Breast epithelium (tissue), 4 donors: ENCODE measurements at regions of chr12 and their contacts with region 1.

Region 1: GRCh38 chr12:53543539-53543938 is 36.3 kb upstream of the NPFF start:
- DNase-seq: peak; percentile 56 to 63
- H3K4me3 ChIP-seq: no peak overlapping the region
- H3K27ac ChIP-seq: peak overlapping the region; percentile 78 to 86
- H3K4me1 ChIP-seq: peaks cover 0 to 10% of the 10 kb centered on the region in 2 donors
- H3K27me3 ChIP-seq: no peaks in the 10 kb centered on the region
- CTCF ChIP-seq: peak; percentile 74 to 98 (median 98)
- POLR2A ChIP-seq: no peak

Region 2: GRCh38 chr12:53675651-53676453 is 132.3 kb after region 1 on chr12 and contains the start of gene ATP5MC2:
- intact Hi-C with region 1: loop called (anchors 5 kb)
- DNase-seq: peak; percentile 97 to 98
- H3K4me3 ChIP-seq: peak within 1 kb of the TSS; percentile 57 to 77 (median 76)
- H3K27ac ChIP-seq: peak within 1 kb of the TSS; percentile 92
- H3K4me1 ChIP-seq: peaks cover 0 to 5% of the 10 kb centered on the region in 2 donors
- H3K27me3 ChIP-seq: no peaks in the 10 kb centered on the region
- CTCF ChIP-seq: peak; percentile 100
- POLR2A ChIP-seq: peak; percentile 57
- total RNA-seq, gene ATP5MC2: 286 to 394 (median 306) TPM